Posterior vena cava (tissue), 2 donors: ENCODE measurements at regions of chr3 and their contacts with region 1.

Region 1: DNA sequence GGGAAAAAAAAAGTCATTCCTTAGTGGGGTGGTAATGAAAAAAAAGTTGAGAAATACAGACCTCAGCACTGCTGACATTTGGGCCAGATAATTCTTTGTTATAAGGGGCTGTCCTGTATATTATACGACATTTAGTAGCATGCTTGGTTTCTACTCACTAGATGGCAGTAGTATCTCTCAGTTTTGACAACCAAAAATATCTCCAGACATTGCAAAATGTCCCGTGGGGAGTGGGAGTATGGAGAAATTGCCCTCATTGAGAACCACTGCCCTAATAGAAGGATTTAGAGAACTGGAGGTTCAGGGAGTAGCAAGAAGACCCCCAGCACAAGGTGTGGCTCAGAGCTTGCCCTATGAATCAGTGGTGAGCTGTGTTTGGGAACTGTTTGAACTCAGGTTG is 28.6 kb upstream of the TEX264 start:
- DNase-seq: no peak

Region 2: DNA sequence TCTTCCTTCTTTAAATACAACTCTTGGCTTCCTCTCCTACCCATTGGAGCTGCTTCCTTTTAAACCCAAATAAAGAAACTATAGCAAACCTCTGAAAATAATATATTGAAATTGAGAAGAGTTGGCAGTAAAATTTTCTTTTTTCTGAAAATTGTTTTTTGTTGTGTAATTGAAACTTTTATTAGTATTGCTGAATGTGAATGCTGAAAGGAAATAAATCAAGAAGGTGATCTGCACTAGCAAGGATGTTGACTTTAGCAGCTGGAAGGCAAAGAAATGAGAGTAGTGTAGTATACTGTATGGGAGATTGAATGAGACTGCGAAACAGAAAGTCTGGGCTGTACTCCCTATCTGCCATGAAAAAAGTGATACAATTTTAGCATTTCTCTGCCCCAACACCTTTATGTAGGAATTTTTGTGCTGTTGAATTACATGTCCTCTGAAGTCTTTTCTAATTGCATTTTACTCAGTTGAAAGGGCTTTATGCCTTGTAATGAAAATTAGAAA is 801.4 kb before region 1 on chr3:
- intact Hi-C with region 1: loop called in 1 of 2 experiments (anchors 10 kb)
- DNase-seq: no peak

Region 3: DNA sequence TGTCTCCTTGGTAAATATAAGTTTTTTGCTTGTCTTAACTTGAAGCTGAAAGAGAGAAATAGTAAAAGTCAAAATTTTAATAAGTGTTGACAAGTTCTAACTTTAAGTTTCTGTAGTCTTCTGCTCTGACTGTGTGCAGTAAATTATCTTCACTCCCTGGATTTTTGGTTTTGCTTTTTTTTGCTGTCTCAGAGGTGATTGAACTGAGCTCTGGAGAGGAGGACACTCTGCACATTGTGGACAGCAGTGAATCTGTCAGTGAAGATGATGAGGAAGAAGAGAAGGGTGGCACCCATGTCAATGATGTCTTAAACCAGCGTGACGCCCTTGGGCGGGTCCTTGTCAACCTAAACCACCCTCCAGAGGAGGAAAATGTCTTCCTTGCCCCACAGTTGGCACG is 11.9 kb before region 1 on chr3:
- intact Hi-C with region 1: loop called in 1 of 2 experiments (anchors 1 kb)
- DNase-seq: no peak

Region 4: GRCh38 chr3:51813539-51813938 is 171.1 kb after region 1 on chr3:
- intact Hi-C with region 1: no loop called
- DNase-seq: no peak